Activated B cell treated with CpG ODN at 0.5 μM for 24 hours (primary cell): ENCODE measurements at regions of chr9 and their contacts with region 1.

Region 1: GRCh38 chr9:21551401-21551800 is 69.3 kb upstream of the IFNE start:
- DNase-seq: no peak
- ATAC-seq: no peak
- H3K4me3 Mint-ChIP-seq: no peak overlapping the region
- H3K27ac Mint-ChIP-seq: no peak overlapping the region
- H3K4me1 Mint-ChIP-seq: no peaks in the 10 kb centered on the region
- H3K27me3 Mint-ChIP-seq: peaks cover 6% of the 10 kb centered on the region
- CTCF ChIP-seq: no peak

Region 2: DNA sequence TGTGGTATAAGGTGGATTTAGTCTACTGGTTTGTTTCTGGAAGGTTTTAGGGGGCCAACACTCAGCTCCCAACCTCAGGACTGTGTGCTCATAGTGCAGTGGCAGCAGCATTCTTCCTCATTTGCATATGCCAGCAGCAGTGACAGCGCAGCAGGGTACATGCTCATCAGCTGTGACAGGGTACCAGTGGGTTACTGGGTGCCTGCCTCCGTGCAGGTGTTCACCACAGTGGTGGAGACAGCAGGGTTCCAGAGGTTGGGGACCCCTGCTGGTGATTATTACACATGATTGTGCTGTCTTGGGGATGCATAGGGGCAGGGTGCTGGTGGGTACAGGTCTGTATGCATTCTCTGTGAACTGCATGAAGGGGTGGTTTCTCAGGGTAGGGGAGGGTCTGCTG is 23.8 kb before region 1 on chr9:
- CTCF ChIA-PET with region 1: no interaction called
- POLR2A ChIA-PET with region 1: no interaction called
- intact Hi-C with region 1: loop called (anchors 2 kb)
- DNase-seq: no peak
- ATAC-seq: peak; percentile 28
- H3K4me3 Mint-ChIP-seq: no peak overlapping the region
- H3K27ac Mint-ChIP-seq: no peak overlapping the region
- H3K4me1 Mint-ChIP-seq: peaks cover 7% of the 10 kb centered on the region
- H3K27me3 Mint-ChIP-seq: peaks cover 34% of the 10 kb centered on the region
- CTCF ChIP-seq: no peak

Region 3: DNA sequence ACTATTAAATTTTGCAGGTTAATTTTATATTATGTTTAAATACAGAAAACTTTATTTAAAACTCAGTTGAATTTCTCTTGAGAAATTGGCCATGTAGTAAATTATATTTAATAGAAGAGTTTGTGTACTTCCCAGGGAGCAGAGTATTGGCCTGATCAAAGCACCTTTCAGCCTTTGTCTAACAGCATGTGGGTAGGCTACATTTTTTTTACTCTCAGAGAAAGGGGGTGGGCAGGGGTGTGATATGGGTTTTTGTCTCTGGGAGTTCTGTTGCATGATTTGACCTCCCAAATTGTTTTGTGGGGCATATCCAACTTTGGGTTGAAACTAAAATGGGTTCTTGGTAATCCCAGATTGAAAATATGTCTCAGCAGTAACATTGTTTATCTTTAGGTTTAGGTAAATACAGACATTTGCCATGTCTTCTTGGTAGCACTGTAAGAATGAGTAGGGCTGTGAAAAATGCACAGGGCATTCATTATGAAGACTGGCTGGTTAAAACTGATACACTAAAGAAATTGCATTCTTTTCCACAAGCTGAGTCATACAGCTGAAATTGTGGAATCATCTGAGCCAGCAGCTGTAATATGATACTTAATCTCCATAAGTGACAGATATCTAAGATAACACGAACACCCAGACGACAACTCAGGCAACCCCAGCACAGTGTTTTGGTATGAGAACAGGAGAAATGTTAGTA is 533.1 kb after region 1 on chr9:
- CTCF ChIA-PET with region 1: no interaction called
- POLR2A ChIA-PET with region 1: no interaction called
- intact Hi-C with region 1: no loop called
- DNase-seq: no peak
- ATAC-seq: no peak
- H3K4me3 Mint-ChIP-seq: no peak overlapping the region
- H3K27ac Mint-ChIP-seq: no peak overlapping the region
- H3K4me1 Mint-ChIP-seq: peaks cover 14% of the 10 kb centered on the region
- H3K27me3 Mint-ChIP-seq: no peaks in the 10 kb centered on the region
- CTCF ChIP-seq: no peak